A673 (cell line): ENCODE measurements at regions of chr1 and their contacts with region 1.

Region 1: DNA sequence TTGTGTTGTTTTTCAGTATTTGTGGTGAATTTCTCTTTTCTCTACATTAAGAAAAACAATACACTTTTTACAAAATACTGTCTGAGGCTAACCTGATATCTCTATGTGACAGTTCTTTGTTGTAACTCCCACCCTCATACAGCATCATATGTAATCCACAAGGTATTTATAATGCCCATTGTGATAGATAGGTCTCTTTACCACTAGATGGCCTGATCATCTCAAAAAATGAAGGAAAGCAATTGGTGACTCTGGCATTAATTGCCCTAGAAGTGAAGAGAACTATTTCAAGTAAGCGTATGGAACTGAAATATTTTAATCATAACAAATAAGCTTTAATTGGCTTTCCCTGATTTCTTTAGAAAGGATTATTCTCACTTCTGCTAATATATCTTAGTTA is 36.2 kb upstream of the HFM1 start:
- DNase-seq: peak; percentile 40
- H3K4me3 ChIP-seq: no peak overlapping the region
- H3K27ac ChIP-seq: no peak overlapping the region
- H3K4me1 ChIP-seq: no peaks in the 10 kb centered on the region
- H3K27me3 ChIP-seq: no peaks in the 10 kb centered on the region
- CTCF ChIP-seq: peak; percentile 58

Region 2: GRCh38 chr1:91881280-91881679 is 440.4 kb after region 1 on chr1:
- CTCF ChIA-PET with region 1: interaction called, 12 read pairs
- POLR2A ChIA-PET with region 1: no interaction called
- intact Hi-C with region 1: no loop called
- DNase-seq: no peak
- H3K4me3 ChIP-seq: no peak overlapping the region
- H3K27ac ChIP-seq: no peak overlapping the region
- H3K4me1 ChIP-seq: peaks cover 16% of the 10 kb centered on the region
- H3K27me3 ChIP-seq: no peaks in the 10 kb centered on the region
- CTCF ChIP-seq: no peak